Right cardiac atrium (tissue), 5 donors: ENCODE measurements at regions of chr4 and their contacts with region 1.

Region 1: GRCh38 chr4:121370729-121371325 is 10.0 kb downstream of the QRFPR start:
- DNase-seq: peak in 2 of 3 donors; percentile 24 to 58
- ATAC-seq: peak in 1 of 2 donors; percentile 44
- H3K4me3 ChIP-seq: no peak overlapping the region
- H3K27ac ChIP-seq: no peak overlapping the region
- H3K4me1 ChIP-seq: no peaks in the 10 kb centered on the region
- H3K27me3 ChIP-seq: no peaks in the 10 kb centered on the region

Region 2: GRCh38 chr4:120753854-120754253 is 617.0 kb before region 1 on chr4:
- intact Hi-C with region 1: no loop called
- DNase-seq: no peak
- ATAC-seq: peak; percentile 69 to 84
- H3K4me3 ChIP-seq: no peak overlapping the region
- H3K27ac ChIP-seq: no peak overlapping the region
- H3K4me1 ChIP-seq: no peaks in the 10 kb centered on the region
- H3K27me3 ChIP-seq: no peaks in the 10 kb centered on the region

Region 3: GRCh38 chr4:121421594-121421993 is 50.8 kb after region 1 on chr4:
- intact Hi-C with region 1: loop called in 3 of 4 experiments (anchors 2 to 5 kb)
- DNase-seq: no peak
- ATAC-seq: no peak
- H3K4me3 ChIP-seq: no peak overlapping the region
- H3K27ac ChIP-seq: no peak overlapping the region
- H3K4me1 ChIP-seq: no peaks in the 10 kb centered on the region
- H3K27me3 ChIP-seq: no peaks in the 10 kb centered on the region

Region 4: GRCh38 chr4:121541696-121542095 is 170.9 kb after region 1 on chr4:
- intact Hi-C with region 1: no loop called
- DNase-seq: no peak
- ATAC-seq: no peak
- H3K4me3 ChIP-seq: no peak overlapping the region
- H3K27ac ChIP-seq: no peak overlapping the region
- H3K4me1 ChIP-seq: peaks cover 1% of the 10 kb centered on the region
- H3K27me3 ChIP-seq: no peaks in the 10 kb centered on the region

Region 5: DNA sequence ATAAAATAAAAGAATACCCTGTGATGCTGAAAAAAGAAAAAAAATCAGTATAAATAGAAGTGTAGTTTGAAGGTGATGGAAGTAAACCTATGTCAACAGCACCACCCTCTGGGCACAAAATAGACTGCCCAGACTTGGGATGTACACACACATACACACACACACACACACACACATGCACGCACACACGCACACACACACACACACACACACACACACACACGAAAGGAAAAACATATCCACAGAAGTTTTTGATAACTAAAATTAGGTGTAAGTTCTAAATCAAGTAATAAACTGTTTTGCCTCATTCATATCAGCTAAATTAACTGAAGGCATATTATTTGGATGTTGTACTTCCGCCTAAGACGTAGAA is 285.4 kb after region 1 on chr4:
- intact Hi-C with region 1: loop called in 2 of 4 experiments (anchors 5 kb)
- DNase-seq: peak; percentile 30 to 68 (median 65)
- ATAC-seq: peak; percentile 67 to 85
- H3K4me3 ChIP-seq: no peak overlapping the region
- H3K27ac ChIP-seq: no peak overlapping the region
- H3K4me1 ChIP-seq: no peaks in the 10 kb centered on the region
- H3K27me3 ChIP-seq: no peaks in the 10 kb centered on the region

Region 6: GRCh38 chr4:121726642-121727268 is 355.9 kb after region 1 on chr4:
- intact Hi-C with region 1: loop called in 2 of 4 experiments (anchors 10 kb)
- DNase-seq: no peak
- ATAC-seq: peak; percentile 67 to 79
- H3K4me3 ChIP-seq: no peak overlapping the region
- H3K27ac ChIP-seq: no peak overlapping the region
- H3K4me1 ChIP-seq: no peaks in the 10 kb centered on the region
- H3K27me3 ChIP-seq: no peaks in the 10 kb centered on the region

Region 7: DNA sequence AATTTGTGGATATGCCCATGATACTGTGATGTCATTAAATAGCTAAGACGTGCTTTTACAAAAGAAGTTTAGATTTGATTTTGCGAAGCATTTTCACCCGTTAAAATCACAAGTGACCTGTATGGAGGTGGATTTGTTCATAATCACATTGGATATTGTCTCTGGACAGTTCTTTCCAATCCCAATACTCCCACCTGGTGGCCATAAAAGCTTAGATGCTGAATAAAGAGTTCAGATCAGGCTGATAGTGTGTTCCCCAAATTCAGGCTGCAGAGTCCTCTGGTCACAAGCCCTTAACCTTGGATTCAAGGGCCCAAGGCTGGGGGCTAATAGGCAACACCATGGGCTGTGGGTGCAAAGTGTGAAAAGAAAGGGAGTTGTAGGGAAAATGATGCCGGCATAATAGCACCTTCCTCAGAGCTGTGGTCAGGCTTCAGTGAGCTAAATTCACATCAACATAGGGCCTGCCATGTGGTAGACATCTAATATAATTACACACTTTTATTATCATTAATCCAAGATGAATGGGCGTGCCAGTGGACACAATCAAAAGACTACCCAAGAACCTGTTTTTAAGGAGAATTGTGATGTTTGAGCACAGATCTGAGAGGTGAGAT is 366.0 kb after region 1 on chr4:
- intact Hi-C with region 1: loop called in 1 of 4 experiments (anchors 10 kb)
- DNase-seq: no peak
- ATAC-seq: peak; percentile 16 to 39
- H3K4me3 ChIP-seq: no peak overlapping the region
- H3K27ac ChIP-seq: no peak overlapping the region
- H3K4me1 ChIP-seq: no peaks in the 10 kb centered on the region
- H3K27me3 ChIP-seq: no peaks in the 10 kb centered on the region